B cell (primary cell): ENCODE measurements at regions of chr7 and their contacts with region 1.

Region 1: DNA sequence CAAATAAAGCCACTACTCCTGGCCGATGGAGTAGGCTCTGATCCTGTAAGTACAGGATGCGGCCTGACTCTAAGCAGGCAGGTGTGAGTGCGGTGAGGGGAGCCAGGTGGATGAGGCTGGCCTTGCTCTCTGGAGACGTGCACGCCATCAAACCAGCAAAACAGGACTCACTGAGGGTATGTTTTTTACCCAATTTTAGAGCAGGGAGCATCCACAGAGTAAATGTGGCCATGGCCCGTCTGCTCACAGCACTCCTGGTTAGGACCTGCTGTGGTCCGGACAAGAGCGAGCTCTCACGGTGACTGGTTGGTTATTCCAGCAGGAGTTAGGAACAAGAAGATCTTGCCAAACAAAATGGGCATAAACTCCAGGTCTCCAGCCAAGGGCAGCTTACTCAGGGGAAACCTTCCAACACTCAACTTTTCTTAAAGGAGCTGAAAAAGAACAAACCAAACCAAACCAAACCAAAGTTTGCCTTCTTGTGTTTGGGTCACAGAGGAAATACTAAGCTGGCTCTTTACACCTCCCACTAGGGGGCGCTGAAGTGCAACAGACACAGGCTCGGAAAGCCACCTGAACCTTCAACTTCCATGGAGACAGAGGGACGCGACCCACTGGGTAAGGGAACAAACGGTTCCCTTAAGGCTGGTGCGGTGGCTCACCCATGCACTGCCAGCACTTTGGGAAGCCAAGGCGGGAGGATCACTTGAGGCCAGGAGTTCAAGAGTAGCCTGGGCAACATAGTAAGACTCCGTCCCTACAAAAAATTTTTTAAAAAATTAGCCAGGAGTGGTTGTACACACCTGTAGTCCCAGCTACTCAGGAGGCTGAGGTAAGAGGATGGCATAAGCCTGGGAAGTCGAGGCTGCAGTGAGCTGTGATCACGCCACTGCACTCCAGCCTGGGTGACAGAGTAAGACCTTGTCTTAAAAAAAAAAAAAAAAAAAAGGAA is 122.4 kb downstream of the CLEC2L start:
- DNase-seq: peak; percentile 83
- ATAC-seq: peak; percentile 39
- H3K4me3 ChIP-seq: no peak overlapping the region
- H3K4me3 Mint-ChIP-seq: peak overlapping the region; percentile 40
- H3K27ac ChIP-seq: no peak overlapping the region
- H3K27ac Mint-ChIP-seq: peak overlapping the region; percentile 57
- H3K4me1 ChIP-seq: peaks cover 38 to 39% of the 10 kb centered on the region in 2 donors
- H3K4me1 Mint-ChIP-seq: peaks cover 38% of the 10 kb centered on the region
- H3K27me3 ChIP-seq: no peaks in the 10 kb centered on the region
- H3K27me3 Mint-ChIP-seq: no peaks in the 10 kb centered on the region
- CTCF ChIP-seq: peak; percentile 91

Region 2: DNA sequence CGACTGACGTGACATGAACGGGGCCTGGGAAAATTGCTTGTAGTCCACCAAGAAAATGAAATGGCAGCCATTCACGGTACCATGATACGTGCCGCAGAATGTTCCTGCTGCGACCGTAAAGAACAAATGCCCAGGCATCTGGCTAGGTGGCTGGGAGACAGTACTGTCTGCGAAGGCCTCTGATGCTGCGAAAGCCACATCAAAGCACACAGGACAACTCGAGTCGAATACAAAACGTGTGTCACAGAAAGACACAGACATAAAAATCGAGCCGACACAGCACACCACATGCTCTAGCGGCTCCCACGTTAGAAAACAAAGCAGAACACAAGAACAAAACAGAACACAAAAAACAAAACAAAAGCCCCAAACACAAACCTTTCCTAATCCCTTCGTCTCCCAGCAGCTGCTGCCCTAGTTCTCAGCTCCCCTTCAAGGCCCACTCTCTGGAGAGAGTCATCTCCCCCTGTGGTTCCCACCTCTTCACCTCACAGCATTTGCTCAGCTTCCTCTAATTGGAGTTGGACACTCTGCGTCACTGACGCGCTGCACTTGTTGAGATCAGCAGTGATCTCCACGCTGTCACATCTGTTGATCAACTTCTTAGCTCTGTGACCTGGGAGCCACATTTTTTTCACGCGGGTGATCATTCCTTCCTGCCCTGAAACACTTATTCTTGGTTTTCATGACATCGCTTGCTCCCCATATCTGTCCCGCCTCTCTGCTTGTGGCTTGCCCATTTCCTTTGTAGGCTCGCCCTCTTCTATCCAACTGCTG is 10.1 kb before region 1 on chr7:
- CTCF ChIA-PET with region 1: interaction called, 18 read pairs
- POLR2A ChIA-PET with region 1: no interaction called
- intact Hi-C with region 1: no loop called
- DNase-seq: no peak
- ATAC-seq: no peak
- H3K4me3 ChIP-seq: no peak overlapping the region
- H3K4me3 Mint-ChIP-seq: no peak overlapping the region
- H3K27ac ChIP-seq: no peak overlapping the region
- H3K27ac Mint-ChIP-seq: no peak overlapping the region
- H3K4me1 ChIP-seq: no peaks in the 10 kb centered on the region
- H3K4me1 Mint-ChIP-seq: no peaks in the 10 kb centered on the region
- H3K27me3 ChIP-seq: no peaks in the 10 kb centered on the region
- H3K27me3 Mint-ChIP-seq: no peaks in the 10 kb centered on the region
- CTCF ChIP-seq: no peak

Region 3: GRCh38 chr7:139680676-139681462 is 35.0 kb after region 1 on chr7:
- CTCF ChIA-PET with region 1: no interaction called
- POLR2A ChIA-PET with region 1: no interaction called
- intact Hi-C with region 1: no loop called
- DNase-seq: no peak
- ATAC-seq: no peak
- H3K4me3 ChIP-seq: no peak overlapping the region
- H3K4me3 Mint-ChIP-seq: no peak overlapping the region
- H3K27ac ChIP-seq: no peak overlapping the region
- H3K27ac Mint-ChIP-seq: peak overlapping the region; percentile 20
- H3K4me1 ChIP-seq: peaks cover 5 to 18% of the 10 kb centered on the region in 2 donors
- H3K4me1 Mint-ChIP-seq: peaks cover 39% of the 10 kb centered on the region
- H3K27me3 ChIP-seq: no peaks in the 10 kb centered on the region
- H3K27me3 Mint-ChIP-seq: no peaks in the 10 kb centered on the region
- CTCF ChIP-seq: no peak

Region 4: GRCh38 chr7:139702811-139703486 is 57.1 kb after region 1 on chr7:
- CTCF ChIA-PET with region 1: interaction called, 9 read pairs
- POLR2A ChIA-PET with region 1: interaction called, 7 read pairs
- intact Hi-C with region 1: loop called (anchors 5 kb)
- DNase-seq: no peak
- ATAC-seq: no peak
- H3K4me3 ChIP-seq: no peak overlapping the region
- H3K4me3 Mint-ChIP-seq: peak overlapping the region; percentile 24
- H3K27ac ChIP-seq: peak overlapping the region; percentile 43 to 69
- H3K27ac Mint-ChIP-seq: peak overlapping the region; percentile 80
- H3K4me1 ChIP-seq: peaks cover 24 to 48% of the 10 kb centered on the region in 2 donors
- H3K4me1 Mint-ChIP-seq: peaks cover 58% of the 10 kb centered on the region
- H3K27me3 ChIP-seq: no peaks in the 10 kb centered on the region
- H3K27me3 Mint-ChIP-seq: no peaks in the 10 kb centered on the region
- CTCF ChIP-seq: no peak

Region 5: DNA sequence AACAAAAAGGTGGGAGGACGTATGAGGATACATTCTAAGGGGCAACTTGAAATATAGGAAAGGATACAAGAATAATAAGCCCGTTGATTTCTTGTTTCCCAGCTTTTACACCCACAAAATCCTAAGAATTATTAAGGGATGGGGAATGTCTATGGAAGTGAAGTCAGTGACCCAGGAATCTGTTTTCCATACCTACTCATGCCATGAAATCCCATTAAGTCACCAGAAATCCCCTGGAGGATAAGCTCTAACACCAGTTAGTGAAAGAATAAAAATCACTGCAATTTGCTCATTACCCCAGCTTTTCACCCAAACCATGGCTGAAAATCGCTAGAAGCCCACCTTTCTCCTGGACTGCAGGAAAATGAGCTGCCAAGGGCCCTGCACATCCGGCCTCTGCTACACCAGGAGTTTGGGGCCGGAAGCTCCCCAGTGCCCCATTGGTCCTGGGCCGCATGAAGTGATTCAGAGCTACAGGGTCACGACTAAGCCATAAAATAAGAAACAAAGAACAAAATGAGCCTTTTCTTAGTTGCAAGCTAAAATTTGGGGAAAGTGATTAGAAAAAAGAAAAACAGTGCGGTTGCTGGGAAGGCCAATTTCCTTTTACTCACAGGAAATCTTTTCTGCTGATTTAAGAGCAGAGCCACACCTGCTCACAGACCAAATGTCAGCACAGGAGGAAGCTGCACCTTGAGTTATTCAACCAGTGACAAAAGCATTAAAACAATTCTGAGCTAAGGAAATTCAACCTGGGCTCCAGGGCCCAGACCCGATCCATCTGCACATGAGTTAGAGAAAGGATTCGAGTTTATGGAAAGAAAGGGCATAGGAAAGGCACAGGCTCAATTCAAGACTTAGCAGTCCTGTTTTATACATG is 91.6 kb after region 1 on chr7:
- CTCF ChIA-PET with region 1: interaction called, 20 read pairs
- POLR2A ChIA-PET with region 1: no interaction called
- intact Hi-C with region 1: no loop called
- DNase-seq: no peak
- ATAC-seq: no peak
- H3K4me3 ChIP-seq: no peak overlapping the region
- H3K4me3 Mint-ChIP-seq: peak overlapping the region; percentile 40
- H3K27ac ChIP-seq: peak overlapping the region in 1 of 2 donors; percentile 63
- H3K27ac Mint-ChIP-seq: peak overlapping the region; percentile 79
- H3K4me1 ChIP-seq: peaks cover 15 to 20% of the 10 kb centered on the region in 2 donors
- H3K4me1 Mint-ChIP-seq: peaks cover 46% of the 10 kb centered on the region
- H3K27me3 ChIP-seq: no peaks in the 10 kb centered on the region
- H3K27me3 Mint-ChIP-seq: no peaks in the 10 kb centered on the region
- CTCF ChIP-seq: no peak

Region 6: DNA sequence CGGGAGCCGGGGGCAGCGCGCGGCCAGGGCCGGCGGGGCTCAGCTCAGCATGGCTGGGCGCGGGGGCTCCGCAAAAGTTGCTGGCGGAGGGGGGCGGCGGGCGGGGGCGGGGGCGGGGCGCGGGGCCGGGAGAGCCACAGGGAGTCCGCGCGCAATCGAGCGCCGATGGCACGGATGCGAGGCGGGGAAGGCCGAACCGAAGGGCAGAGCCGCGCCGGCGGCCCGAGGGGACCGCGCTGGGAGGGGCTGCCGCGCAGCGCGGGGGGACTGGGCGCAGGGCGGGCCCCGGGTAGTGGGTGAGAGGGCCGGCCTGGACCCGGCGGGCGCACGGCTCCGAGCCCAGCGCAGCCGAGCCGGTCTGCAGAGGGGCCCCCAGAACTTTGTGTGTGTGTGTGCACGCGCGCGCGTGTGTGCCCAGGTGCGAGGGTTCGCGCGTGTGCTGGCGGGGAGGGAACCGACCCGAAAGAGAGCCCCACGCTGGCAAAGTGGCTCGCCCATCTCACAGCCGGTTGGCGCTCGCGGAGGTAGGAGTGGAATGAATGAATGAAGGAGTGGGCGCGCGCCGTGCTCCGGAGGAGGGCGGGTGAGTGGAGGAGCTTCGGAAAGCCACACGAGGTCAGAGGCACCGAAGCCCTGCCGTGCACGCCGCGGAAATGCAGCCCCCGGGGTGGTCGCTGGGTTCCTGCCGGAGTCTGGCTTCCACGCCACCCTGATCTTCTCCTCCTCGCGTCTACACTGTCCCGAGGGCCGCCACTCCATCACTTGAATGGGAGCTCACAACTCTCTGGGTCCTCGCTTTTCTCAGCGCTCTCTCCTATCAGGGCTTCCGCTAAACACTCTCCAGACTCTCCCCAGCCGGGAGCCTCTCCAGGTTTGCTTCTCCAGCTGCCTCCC is 132.3 kb after region 1 on chr7 and contains the start of gene HIPK2:
- CTCF ChIA-PET with region 1: interaction called, 26 read pairs
- POLR2A ChIA-PET with region 1: interaction called, 4 read pairs
- intact Hi-C with region 1: loop called (anchors 2 kb)
- DNase-seq: peak; percentile 82
- ATAC-seq: peak; percentile 78
- H3K4me3 ChIP-seq: peak within 1 kb of the TSS; percentile 71 to 97 (median 78)
- H3K4me3 Mint-ChIP-seq: peak within 1 kb of the TSS; percentile 98
- H3K27ac ChIP-seq: peak within 1 kb of the TSS; percentile 66 to 81
- H3K27ac Mint-ChIP-seq: peak within 1 kb of the TSS; percentile 95
- H3K4me1 ChIP-seq: peaks cover 11 to 23% of the 10 kb centered on the region in 2 donors
- H3K4me1 Mint-ChIP-seq: peaks cover 35% of the 10 kb centered on the region
- H3K27me3 ChIP-seq: peaks cover 0 to 5% (median 1%) of the 10 kb centered on the region in 4 experiments
- H3K27me3 Mint-ChIP-seq: peaks cover 16% of the 10 kb centered on the region
- CTCF ChIP-seq: no peak
- total RNA-seq, gene HIPK2: 58.2 and 60.5 TPM in 2 replicates

Region 7: GRCh38 chr7:140003913-140004382 is 358.1 kb after region 1 on chr7:
- CTCF ChIA-PET with region 1: interaction called, 269 read pairs
- POLR2A ChIA-PET with region 1: interaction called, 6 read pairs
- intact Hi-C with region 1: loop called (anchors 1 kb)
- DNase-seq: peak; percentile 61
- ATAC-seq: peak; percentile 49
- H3K4me3 ChIP-seq: no peak overlapping the region
- H3K4me3 Mint-ChIP-seq: no peak overlapping the region
- H3K27ac ChIP-seq: no peak overlapping the region
- H3K27ac Mint-ChIP-seq: peak overlapping the region; percentile 46
- H3K4me1 ChIP-seq: peaks cover 0 to 2% of the 10 kb centered on the region in 2 donors
- H3K4me1 Mint-ChIP-seq: peaks cover 2% of the 10 kb centered on the region
- H3K27me3 ChIP-seq: no peaks in the 10 kb centered on the region
- H3K27me3 Mint-ChIP-seq: no peaks in the 10 kb centered on the region
- CTCF ChIP-seq: peak; percentile 75

Region 8: GRCh38 chr7:140136073-140136472 is 490.2 kb after region 1 on chr7:
- CTCF ChIA-PET with region 1: no interaction called
- POLR2A ChIA-PET with region 1: no interaction called
- intact Hi-C with region 1: no loop called
- DNase-seq: no peak
- ATAC-seq: no peak
- H3K4me3 ChIP-seq: no peak overlapping the region
- H3K4me3 Mint-ChIP-seq: no peak overlapping the region
- H3K27ac ChIP-seq: no peak overlapping the region
- H3K27ac Mint-ChIP-seq: no peak overlapping the region
- H3K4me1 ChIP-seq: no peaks in the 10 kb centered on the region
- H3K4me1 Mint-ChIP-seq: peaks cover 18% of the 10 kb centered on the region
- H3K27me3 ChIP-seq: no peaks in the 10 kb centered on the region
- H3K27me3 Mint-ChIP-seq: no peaks in the 10 kb centered on the region
- CTCF ChIP-seq: no peak